Naive thymus-derived CD8-positive, alpha-beta T cell (primary cell): ENCODE measurements at regions of chr14 and their contacts with region 1.

Region 1: DNA sequence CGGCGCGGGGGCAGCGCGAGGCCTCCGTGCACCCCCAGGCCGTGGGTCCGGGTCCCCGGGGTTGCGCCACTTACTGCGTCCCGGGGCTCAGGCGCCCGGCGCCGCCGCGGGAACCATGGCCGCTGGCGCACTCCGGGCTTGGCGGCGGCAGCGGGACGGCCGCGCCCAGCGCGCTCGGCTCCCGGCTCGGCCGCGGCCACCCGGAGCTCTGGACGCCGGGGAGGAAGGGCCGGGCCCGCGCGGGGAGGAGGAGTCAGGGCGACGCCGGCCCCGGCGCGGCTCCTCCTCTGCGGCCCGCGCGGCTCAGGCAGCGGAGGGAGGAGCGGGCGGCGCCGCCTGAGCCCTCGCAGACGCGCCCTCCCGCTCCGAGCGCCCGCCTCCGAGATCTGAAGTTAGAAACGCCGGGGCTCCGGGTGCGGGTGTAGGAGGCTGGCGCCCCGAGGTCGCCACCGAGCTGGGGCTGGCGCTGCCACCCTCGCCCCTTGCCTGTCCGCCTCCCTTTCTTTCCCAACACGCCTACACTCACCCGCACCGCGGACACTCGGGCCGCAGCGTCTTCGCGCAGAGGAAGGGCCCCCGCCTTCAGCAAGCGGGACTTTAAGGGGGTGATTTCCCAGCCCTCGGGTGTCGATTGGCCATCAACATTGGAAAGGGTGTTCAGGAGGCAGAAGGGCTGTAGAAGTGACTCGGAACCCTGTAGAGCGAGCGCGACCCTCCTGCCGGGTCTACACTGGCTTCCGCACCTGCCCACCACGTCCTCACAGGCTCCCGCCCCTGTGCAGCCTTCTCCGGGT is at the start of gene NIN:
- DNase-seq: peak; percentile 63 to 83 (median 72)
- ATAC-seq: peak; percentile 77 to 81
- H3K4me3 Mint-ChIP-seq: peak within 1 kb of the TSS; percentile 89 to 99 (median 98)
- H3K27ac Mint-ChIP-seq: peak within 1 kb of the TSS; percentile 95 to 99 (median 98)
- H3K4me1 Mint-ChIP-seq: peaks cover 40 to 80% (median 70%) of the 10 kb centered on the region in 4 donors
- H3K27me3 Mint-ChIP-seq: no peaks in the 10 kb centered on the region
- polyA plus RNA-seq, gene NIN: 37.1 to 60.2 (median 42.7) TPM

Region 2: GRCh38 chr14:50775357-50775756 is 55.8 kb before region 1 on chr14:
- POLR2A ChIA-PET with region 1: interaction called, 15 read pairs
- DNase-seq: no peak
- ATAC-seq: no peak
- H3K4me3 Mint-ChIP-seq: no peak overlapping the region
- H3K27ac Mint-ChIP-seq: peak overlapping the region in 1 of 10 donors; percentile 7
- H3K4me1 Mint-ChIP-seq: peaks cover 15 to 37% (median 32%) of the 10 kb centered on the region in 4 donors
- H3K27me3 Mint-ChIP-seq: no peaks in the 10 kb centered on the region

Region 3: GRCh38 chr14:50785457-50786063 is 45.6 kb before region 1 on chr14:
- POLR2A ChIA-PET with region 1: interaction called, 79 read pairs
- DNase-seq: peak in 2 of 10 donors; percentile 39 to 44
- ATAC-seq: peak; percentile 64 to 72
- H3K4me3 Mint-ChIP-seq: peak overlapping the region; percentile 50 to 85 (median 63)
- H3K27ac Mint-ChIP-seq: peak overlapping the region; percentile 89 to 98 (median 96)
- H3K4me1 Mint-ChIP-seq: peaks cover 43 to 96% (median 85%) of the 10 kb centered on the region in 4 donors
- H3K27me3 Mint-ChIP-seq: no peaks in the 10 kb centered on the region

Region 4: DNA sequence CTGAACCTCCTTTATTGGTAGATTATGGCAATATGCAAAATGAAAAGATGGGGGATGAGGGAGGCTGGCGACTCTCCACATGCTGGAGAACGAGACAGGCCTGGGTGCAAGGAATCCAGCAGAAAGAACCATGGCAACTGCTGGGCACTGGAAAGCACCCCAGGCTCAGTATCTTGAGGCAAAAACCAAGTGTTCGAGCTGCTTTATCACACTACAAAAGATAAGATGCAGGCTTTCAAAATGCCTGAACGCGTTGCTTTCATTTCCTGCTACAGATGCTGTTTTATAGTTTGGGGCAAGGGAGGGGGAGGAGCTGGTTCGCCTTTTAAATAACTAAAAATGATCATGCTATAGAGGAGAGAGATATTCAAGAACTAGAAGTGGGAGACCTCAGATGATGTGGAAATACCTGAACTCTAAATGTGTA is 39.1 kb before region 1 on chr14:
- POLR2A ChIA-PET with region 1: interaction called, 79 read pairs
- DNase-seq: peak in 5 of 10 donors; percentile 12 to 55 (median 46)
- ATAC-seq: peak; percentile 70
- H3K4me3 Mint-ChIP-seq: peak overlapping the region; percentile 68 to 88 (median 82)
- H3K27ac Mint-ChIP-seq: peak overlapping the region; percentile 88 to 99 (median 98)
- H3K4me1 Mint-ChIP-seq: peaks cover 45 to 99% (median 88%) of the 10 kb centered on the region in 4 donors
- H3K27me3 Mint-ChIP-seq: no peaks in the 10 kb centered on the region